Naive thymus-derived CD8-positive, alpha-beta T cell (primary cell): ENCODE measurements at regions of chr5 and their contacts with region 1.

Region 1: DNA sequence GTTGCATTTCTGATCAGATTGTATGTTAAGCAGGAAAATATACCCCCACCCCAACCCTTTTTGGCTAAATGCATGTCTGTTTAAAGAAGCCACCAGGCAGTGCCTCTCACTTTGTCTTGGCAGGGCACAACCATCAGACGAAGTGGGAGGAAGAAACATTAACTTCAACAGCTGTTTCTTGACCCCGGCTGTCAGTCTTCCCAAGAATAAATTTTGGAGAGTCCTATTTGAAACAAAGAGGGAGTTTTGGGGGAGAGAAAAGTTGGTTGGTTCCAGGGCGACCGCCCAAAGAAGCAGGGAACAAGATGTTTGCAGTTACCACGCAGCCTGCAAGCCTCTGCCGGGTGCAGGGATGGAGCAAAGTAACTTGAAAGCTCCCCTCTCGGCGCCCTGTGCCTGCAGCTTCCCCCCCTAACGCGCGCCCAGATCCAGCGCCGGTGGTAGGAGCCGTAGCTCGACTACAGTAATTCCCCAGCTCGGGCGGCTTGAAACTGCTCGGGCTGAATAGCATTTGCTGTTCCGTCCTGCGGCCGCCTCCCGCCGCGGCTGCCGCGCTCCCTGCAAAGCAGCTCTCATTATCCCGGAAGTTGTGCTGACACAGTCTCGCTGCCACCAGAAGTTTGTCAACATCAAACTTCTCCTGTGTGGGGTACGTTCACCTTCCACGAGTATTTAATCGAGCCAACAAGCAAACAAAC is 100.7 kb upstream of the SSBP2 start:
- DNase-seq: peak; percentile 83 to 91 (median 85)
- ATAC-seq: peak; percentile 87 to 88
- H3K4me3 Mint-ChIP-seq: peak overlapping the region; percentile 88 to 97 (median 94)
- H3K27ac Mint-ChIP-seq: peak overlapping the region; percentile 89 to 100 (median 97)
- H3K4me1 Mint-ChIP-seq: peaks cover 29 to 61% (median 49%) of the 10 kb centered on the region in 4 donors
- H3K27me3 Mint-ChIP-seq: no peaks in the 10 kb centered on the region

Region 2: GRCh38 chr5:81726297-81726696 is 125.3 kb before region 1 on chr5:
- POLR2A ChIA-PET with region 1: no interaction called
- DNase-seq: no peak
- ATAC-seq: no peak
- H3K4me3 Mint-ChIP-seq: no peak overlapping the region
- H3K27ac Mint-ChIP-seq: peak overlapping the region in 3 of 10 donors; percentile 7 to 72 (median 66)
- H3K4me1 Mint-ChIP-seq: peaks cover 24 to 51% (median 49%) of the 10 kb centered on the region in 4 donors
- H3K27me3 Mint-ChIP-seq: no peaks in the 10 kb centered on the region

Region 3: DNA sequence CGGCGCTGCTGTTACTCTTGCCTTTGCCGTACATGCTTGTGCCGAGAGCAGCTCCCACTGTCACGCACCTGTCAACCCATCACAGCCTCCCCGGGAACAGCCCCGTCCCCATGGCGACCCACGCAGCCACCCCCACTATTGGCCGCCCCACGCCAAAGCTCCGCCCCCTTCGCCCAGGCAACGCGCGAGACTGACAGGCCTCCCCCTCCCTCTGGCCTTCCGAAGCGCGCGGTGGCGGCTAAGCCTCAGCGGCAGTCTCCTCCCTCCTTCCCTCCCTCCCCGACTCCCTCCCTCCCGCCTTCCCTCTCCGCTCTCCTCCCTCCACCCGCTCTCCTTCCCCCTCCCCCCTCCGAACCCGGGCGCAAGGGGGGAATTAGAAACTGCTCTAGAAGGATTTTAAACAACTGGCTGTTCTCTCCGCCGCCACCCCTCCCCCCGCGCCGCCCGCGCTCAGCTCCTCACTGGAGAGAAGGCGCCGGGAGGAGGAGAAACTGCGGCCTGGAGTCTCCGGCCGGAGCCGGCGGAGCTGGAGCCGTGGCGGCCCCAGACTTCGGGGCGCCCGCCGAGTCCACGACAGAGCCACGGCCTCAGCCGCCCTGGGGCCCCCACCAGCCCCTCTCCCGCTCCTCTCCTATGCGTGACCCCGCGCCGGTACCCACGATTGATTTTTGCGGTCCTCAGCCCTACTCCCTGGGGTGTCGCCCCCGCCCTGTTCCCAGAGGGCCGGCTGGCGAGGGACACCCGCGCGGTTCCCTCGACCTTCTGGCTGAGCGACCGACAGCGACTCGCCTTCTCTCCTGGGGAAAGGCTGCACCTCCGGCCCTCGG is 100.4 kb before region 1 on chr5 and contains the start of gene SSBP2:
- POLR2A ChIA-PET with region 1: interaction called, 190 read pairs
- DNase-seq: peak; percentile 98 to 100 (median 99)
- ATAC-seq: peak; percentile 83 to 88
- H3K4me3 Mint-ChIP-seq: peak within 1 kb of the TSS; percentile 93 to 99 (median 96)
- H3K27ac Mint-ChIP-seq: peak within 1 kb of the TSS; percentile 68 to 98 (median 96)
- H3K4me1 Mint-ChIP-seq: peaks cover 13 to 41% (median 38%) of the 10 kb centered on the region in 4 donors
- H3K27me3 Mint-ChIP-seq: no peaks in the 10 kb centered on the region
- polyA plus RNA-seq, gene SSBP2: 36.4 to 43.8 (median 36.8) TPM

Region 4: DNA sequence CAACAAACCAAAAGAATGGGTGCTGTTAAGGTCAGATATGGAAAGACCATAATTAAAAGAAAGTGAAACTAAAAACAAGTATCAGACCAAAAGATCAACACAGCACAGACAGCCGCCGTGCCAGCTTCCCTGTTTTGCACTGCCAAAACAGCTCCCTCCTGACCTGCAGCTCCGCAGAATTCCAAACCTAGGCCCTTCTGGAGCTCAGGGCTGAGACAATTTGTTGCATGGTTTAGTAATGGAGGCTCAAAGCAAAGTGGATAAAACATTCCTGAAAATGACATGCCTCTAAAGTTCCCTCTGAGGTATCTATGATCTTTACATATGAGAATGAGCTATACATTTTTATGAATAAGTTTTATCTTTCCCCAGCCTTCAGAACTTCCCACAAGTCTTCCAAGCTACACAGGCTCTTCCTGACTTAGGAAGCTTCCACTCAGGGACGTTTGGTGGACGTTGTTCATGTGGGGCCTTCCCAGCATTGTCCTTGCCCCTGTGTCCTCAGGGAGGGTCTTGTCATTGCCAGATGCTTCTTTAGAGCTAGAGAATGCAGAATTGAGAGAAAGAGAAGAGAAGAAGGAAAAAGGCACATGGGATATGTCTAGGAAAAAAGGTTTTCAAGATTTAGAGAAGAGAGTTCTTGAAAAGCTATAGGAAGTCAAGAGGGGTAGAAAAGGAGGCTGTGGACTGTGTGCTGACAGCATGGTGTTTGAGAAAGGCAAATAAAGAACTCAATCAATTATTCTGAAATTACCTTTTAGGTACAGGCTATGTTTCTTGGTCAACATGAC is 72.3 kb before region 1 on chr5:
- POLR2A ChIA-PET with region 1: interaction called, 11 read pairs
- DNase-seq: peak in 7 of 10 donors; percentile 4 to 53 (median 24)
- ATAC-seq: peak; percentile 72 to 76
- H3K4me3 Mint-ChIP-seq: peak overlapping the region; percentile 76 to 92 (median 88)
- H3K27ac Mint-ChIP-seq: peak overlapping the region; percentile 92 to 98 (median 95)
- H3K4me1 Mint-ChIP-seq: peaks cover 11 to 29% (median 24%) of the 10 kb centered on the region in 4 donors
- H3K27me3 Mint-ChIP-seq: no peaks in the 10 kb centered on the region

Region 5: GRCh38 chr5:81838307-81838906 is 13.2 kb before region 1 on chr5:
- POLR2A ChIA-PET with region 1: interaction called, 13 read pairs
- DNase-seq: peak in 6 of 10 donors; percentile 9 to 70 (median 34)
- ATAC-seq: peak; percentile 73 to 82
- H3K4me3 Mint-ChIP-seq: no peak overlapping the region
- H3K27ac Mint-ChIP-seq: peak overlapping the region in 3 of 10 donors; percentile 46 to 77 (median 49)
- H3K4me1 Mint-ChIP-seq: peaks cover 5 to 10% (median 7%) of the 10 kb centered on the region in 4 donors
- H3K27me3 Mint-ChIP-seq: no peaks in the 10 kb centered on the region

Region 6: DNA sequence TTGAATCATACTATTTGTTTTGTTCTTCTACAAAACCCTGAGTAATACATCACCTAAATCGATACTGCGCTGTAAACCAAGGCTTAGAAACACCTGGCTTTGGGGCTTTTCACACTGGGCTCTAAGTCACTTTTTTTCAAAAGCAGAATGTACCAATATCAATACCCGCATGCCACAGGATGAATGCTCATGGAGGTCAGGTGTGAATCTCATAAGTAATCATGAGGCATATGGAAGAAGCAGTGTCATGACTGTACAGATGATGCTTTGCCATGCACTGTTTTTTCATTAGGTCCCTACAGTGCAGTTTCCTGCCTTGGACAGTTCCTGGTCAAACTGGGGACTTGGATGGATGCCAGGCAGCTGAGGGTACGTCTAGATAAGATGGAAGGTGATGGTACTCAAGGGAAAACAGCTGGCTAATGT is 71.2 kb after region 1 on chr5:
- POLR2A ChIA-PET with region 1: no interaction called
- DNase-seq: no peak
- ATAC-seq: no peak
- H3K4me3 Mint-ChIP-seq: no peak overlapping the region
- H3K27ac Mint-ChIP-seq: no peak overlapping the region
- H3K4me1 Mint-ChIP-seq: no peaks in the 10 kb centered on the region
- H3K27me3 Mint-ChIP-seq: peaks cover 0 to 4% (median 0%) of the 10 kb centered on the region in 5 donors

Region 7: DNA sequence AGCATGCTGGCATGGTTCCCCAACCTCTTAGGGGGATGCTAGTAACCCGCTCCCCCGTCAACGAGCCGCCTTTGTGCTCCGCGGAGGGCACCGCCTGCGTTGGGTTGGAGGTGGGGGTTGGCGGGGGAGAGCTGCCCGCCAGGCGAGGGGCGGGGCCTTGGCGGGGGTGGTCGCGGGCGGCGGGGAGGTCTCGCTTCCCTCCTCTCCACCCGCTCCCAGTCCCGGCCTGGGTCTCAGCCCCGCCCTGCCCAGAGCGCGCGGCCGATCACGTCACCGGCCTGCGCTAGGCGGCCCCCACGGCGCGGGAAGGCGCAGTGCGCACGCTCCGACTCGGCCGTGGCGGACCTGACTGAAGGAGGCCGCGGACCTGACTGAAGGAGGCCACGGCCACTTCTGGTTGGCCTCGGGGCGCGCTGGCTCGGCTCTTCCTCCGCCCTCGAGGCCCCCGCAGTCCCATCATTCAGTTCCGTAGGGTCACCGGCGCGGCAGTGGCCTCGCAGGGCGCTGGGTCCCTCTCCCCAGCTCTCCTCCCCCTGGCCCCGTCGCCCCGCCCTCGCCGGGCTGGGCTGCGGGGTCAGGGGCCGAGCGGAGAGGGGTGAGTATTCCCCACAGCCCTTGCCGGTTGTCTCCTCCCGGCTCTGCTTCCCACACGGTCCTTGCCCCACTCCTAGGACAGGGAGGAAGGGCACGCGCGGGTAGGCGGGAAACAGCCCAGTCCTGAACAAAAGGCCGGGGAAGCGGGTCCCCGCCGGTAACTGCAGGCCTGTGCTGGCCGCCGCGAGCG is 120.3 kb after region 1 on chr5 and contains the start of gene ATG10:
- POLR2A ChIA-PET with region 1: interaction called, 33 read pairs
- DNase-seq: peak; percentile 82 to 93 (median 87)
- ATAC-seq: peak; percentile 85 to 89
- H3K4me3 Mint-ChIP-seq: peak within 1 kb of the TSS; percentile 93 to 100 (median 98)
- H3K27ac Mint-ChIP-seq: peak within 1 kb of the TSS; percentile 96 to 100 (median 99)
- H3K4me1 Mint-ChIP-seq: peaks cover 6 to 29% (median 25%) of the 10 kb centered on the region in 4 donors
- H3K27me3 Mint-ChIP-seq: peaks cover 0 to 1% (median 0%) of the 10 kb centered on the region in 5 donors
- polyA plus RNA-seq, gene ATG10: 9.2 to 11.8 (median 11.6) TPM

Region 8: DNA sequence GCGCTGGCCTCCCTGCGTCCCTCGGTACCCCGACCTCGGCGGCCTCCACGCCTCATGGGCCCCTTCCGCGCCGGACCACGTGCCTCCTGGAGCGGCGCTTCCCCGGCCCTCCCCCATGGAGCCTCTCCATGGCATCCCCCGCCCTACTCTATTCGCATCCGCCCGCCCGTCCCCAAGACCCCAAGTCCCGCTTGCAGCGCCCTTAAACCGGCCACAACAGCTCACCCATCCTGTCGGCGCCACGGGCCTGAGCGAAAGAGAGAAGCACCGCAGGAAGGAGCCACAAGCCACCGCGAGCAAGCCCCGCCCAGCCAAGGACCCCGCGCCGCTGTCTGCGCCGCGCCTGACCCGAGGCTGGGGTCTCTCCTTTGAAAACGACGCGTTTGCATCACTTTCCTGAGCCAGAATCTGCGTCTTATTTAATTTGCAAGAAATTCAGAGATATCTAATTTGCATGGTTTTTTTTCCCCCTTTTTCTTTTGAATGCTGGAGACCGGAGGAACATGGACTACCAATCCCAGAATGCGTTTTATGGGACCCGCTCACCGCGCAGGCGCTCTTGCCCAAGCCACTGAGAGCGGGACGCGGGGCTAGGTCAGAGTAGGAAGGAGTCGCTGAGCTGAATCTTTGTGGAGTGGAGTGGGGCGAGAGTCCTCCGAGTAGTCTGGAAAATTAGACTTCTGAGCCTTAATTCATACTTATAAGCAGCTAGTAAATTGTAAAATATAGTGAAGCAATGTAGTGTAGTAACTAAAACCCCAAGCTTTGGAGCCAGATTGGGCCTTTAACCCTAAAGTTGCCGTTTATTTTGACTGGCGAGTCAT is 426.7 kb after region 1 on chr5 and contains the start of gene RPS23:
- POLR2A ChIA-PET with region 1: interaction called, 11 read pairs
- DNase-seq: peak; percentile 72 to 94 (median 84)
- ATAC-seq: peak; percentile 91 to 92
- H3K4me3 Mint-ChIP-seq: peak within 1 kb of the TSS; percentile 93 to 98 (median 95)
- H3K27ac Mint-ChIP-seq: peak within 1 kb of the TSS; percentile 95 to 99 (median 97)
- H3K4me1 Mint-ChIP-seq: peaks cover 19 to 46% (median 37%) of the 10 kb centered on the region in 4 donors
- H3K27me3 Mint-ChIP-seq: no peaks in the 10 kb centered on the region
- polyA plus RNA-seq, gene RPS23: 4,084 to 5,098 (median 4,391) TPM